GM10248 (cell line): ENCODE measurements at regions of chr2 and their contacts with region 1.

Region 1: DNA sequence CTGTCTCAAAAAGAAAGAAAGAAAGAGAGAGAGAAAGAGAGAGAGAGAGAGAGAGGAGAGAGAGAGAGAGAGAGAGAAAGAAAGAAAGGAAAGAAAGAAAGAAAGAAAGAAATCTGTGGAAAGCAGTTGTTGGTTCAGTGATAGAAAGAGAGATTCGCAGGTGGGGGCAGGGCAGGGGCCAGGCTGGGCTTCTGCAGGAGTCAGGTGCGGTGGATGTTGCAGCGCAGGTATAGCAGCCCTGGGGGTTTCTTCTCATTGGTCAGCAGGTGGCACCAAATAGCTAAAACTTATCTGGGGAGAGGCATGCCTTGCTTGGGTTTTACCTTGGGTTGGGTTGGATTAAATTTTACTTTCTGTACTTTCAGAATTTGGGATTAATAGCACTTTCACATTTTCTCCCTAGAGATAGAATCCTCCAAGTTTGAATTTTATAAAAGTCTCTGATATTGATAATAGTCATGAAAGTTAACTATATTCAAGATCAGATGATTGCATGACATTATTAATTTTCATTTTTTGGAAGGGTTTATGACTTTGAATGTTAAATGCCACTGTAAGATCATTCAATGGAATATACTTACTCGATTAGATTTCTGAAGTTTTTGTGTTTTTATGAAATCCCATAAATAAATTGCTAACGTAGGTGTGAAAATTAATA is 66.6 kb downstream of the SPTBN1 start:
- DNase-seq: peak; percentile 73
- CTCF ChIP-seq: peak; percentile 68

Region 2: DNA sequence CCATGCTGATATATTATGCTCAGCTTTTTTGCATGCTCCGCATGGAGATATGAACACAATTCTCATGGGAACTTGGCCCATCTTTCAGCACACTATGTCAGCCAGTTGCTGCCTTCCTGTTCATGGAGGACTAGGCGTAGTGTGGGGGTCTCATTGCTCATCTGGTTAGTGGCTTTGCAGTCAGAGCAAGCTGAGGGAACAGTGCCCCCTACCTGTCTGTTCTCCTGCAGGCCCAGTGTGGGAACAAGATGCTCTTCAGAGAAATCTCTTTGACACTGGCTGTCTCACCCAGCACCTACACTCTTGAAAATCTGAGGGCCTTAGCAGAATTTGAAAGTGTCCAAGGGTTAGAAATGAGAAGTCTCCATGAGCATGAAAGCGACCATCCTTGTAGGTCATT is 19.6 kb before region 1 on chr2:
- CTCF ChIA-PET with region 1: interaction called, 19 read pairs
- POLR2A ChIA-PET with region 1: no interaction called
- DNase-seq: peak; percentile 53
- CTCF ChIP-seq: peak; percentile 65

Region 3: GRCh38 chr2:54558188-54559005 is 35.6 kb after region 1 on chr2:
- CTCF ChIA-PET with region 1: interaction called, 16 read pairs
- POLR2A ChIA-PET with region 1: interaction called, 4 read pairs
- DNase-seq: peak; percentile 67
- CTCF ChIP-seq: no peak

Region 4: DNA sequence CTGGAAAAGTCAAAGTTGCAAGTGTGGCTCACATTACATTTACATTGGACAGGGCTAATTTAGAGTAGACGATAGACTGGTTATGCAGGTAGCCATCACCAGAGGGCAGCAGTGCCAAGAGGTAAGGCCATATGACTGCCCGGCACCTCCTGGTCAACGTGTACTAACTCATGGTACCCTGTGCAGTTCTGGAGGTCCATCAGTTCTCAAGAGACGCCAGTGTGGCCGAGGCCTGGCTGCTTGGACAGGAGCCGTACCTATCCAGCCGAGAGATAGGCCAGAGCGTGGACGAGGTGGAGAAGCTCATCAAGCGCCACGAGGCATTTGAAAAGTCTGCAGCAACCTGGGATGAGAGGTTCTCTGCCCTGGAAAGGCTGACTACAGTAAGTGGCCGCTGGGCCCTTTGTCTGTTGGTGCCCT is 134.9 kb after region 1 on chr2:
- CTCF ChIA-PET with region 1: interaction called, 11 read pairs
- POLR2A ChIA-PET with region 1: no interaction called
- DNase-seq: peak; percentile 48
- CTCF ChIP-seq: peak; percentile 45

Region 5: GRCh38 chr2:54704688-54705605 is 182.2 kb after region 1 on chr2:
- CTCF ChIA-PET with region 1: interaction called, 113 read pairs
- POLR2A ChIA-PET with region 1: no interaction called
- DNase-seq: peak; percentile 46
- CTCF ChIP-seq: peak; percentile 54